Gastrocnemius medialis (tissue), 4 donors: ENCODE measurements at regions of chr18 and their contacts with region 1.

Region 1: DNA sequence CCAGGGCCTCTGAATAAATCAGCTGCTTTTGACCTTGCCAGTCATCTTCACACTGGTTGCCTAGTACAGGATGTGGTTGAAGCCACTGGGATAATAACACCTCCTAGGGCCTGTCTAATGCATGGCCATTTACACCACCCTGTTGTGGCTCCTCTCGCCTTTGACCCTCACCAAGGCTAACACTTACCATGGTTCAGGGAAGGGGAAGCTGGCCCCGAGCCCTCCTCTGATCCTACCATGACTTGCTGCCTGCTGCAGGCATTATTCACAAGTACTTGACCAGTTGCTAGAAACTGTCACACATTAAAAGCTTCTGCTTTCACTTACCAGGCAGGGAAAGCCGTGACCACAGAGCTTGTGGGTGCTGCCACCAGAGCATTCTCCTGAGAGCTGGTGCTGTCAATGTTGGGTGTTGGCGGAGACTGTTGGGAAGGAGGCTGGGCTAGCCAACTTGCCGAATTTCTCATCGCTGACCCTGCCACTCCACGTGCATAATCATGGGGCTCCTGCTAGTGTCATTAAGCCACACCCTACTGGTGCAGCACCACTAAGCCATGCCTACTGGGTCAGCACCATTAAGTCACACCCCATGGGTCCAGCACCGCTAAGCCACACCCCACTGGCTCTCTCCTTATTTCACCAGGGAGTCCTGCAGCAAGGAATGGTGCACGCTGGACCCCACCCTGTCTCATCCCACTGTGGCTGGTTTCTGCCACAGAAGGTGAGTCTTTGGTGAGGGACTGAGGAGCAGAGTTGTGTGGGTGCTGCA is 47.0 kb upstream of the TTC39C start:
- DNase-seq: no peak
- ATAC-seq: no peak
- H3K4me3 ChIP-seq: no peak overlapping the region
- H3K27ac ChIP-seq: no peak overlapping the region
- H3K4me1 ChIP-seq: no peaks in the 10 kb centered on the region
- H3K27me3 ChIP-seq: no peaks in the 10 kb centered on the region
- CTCF ChIP-seq: no peak
- POLR2A ChIP-seq: no peak

Region 2: GRCh38 chr18:24118750-24119577 is 151.5 kb after region 1 on chr18:
- in situ Hi-C with region 1: no loop called
- intact Hi-C with region 1: loop called (anchors 10 kb)
- DNase-seq: peak; percentile 17 to 48
- ATAC-seq: peak; percentile 70 to 84
- H3K4me3 ChIP-seq: no peak overlapping the region
- H3K27ac ChIP-seq: no peak overlapping the region
- H3K4me1 ChIP-seq: no peaks in the 10 kb centered on the region
- H3K27me3 ChIP-seq: no peaks in the 10 kb centered on the region
- CTCF ChIP-seq: peak; percentile 75 to 89 (median 86)
- POLR2A ChIP-seq: no peak